Left lung (tissue), 14 donors: ENCODE measurements at regions of chr13 and their contacts with region 1.

Region 1: GRCh38 chr13:102845630-102846260 is at the start of gene ERCC5:
- DNase-seq: peak; percentile 93 to 99 (median 96)
- ATAC-seq: peak; percentile 94
- H3K4me3 ChIP-seq: peak within 1 kb of the TSS; percentile 75 to 89
- H3K27ac ChIP-seq: peak within 1 kb of the TSS; percentile 98 to 100
- H3K4me1 ChIP-seq: peaks cover 7 to 24% of the 10 kb centered on the region in 2 donors
- H3K27me3 ChIP-seq: no peaks in the 10 kb centered on the region
- CTCF ChIP-seq: no peak
- polyA plus RNA-seq, gene ERCC5: 70.8 to 95.8 (median 85.0) TPM

Region 2: GRCh38 chr13:102591988-102592781 is 253.6 kb before region 1 on chr13:
- intact Hi-C with region 1: loop called in 1 of 2 experiments (anchors 5 kb)
- DNase-seq: peak; percentile 56 to 90 (median 72)
- ATAC-seq: peak; percentile 35
- H3K4me3 ChIP-seq: peak overlapping the region; percentile 38 to 56
- H3K27ac ChIP-seq: peak overlapping the region; percentile 53 to 62
- H3K4me1 ChIP-seq: peaks cover 0 to 29% of the 10 kb centered on the region in 2 donors
- H3K27me3 ChIP-seq: no peaks in the 10 kb centered on the region
- CTCF ChIP-seq: peak; percentile 39 to 50

Region 3: DNA sequence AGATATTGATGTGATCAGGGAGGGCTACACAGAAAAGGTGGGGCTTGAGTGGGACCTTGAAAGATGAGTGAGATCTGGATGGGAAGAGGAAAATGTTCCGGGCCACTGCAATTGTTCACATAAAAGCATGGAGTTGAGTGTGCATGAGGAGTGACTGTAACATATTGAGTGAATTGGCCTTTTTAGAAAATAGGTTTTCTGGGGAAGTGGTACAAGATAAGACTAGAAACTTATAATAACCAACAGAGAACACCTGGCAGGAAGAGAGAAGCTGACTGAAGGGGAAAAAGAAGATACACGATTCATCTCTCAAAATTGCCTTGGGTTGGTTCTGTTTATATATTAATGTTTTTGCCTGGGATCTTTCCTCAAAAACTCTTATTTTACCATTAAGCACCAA is 188.3 kb after region 1 on chr13:
- intact Hi-C with region 1: no loop called
- DNase-seq: no peak
- ATAC-seq: no peak
- H3K4me3 ChIP-seq: no peak overlapping the region
- H3K27ac ChIP-seq: no peak overlapping the region
- H3K4me1 ChIP-seq: no peaks in the 10 kb centered on the region
- H3K27me3 ChIP-seq: no peaks in the 10 kb centered on the region
- CTCF ChIP-seq: no peak

Region 4: DNA sequence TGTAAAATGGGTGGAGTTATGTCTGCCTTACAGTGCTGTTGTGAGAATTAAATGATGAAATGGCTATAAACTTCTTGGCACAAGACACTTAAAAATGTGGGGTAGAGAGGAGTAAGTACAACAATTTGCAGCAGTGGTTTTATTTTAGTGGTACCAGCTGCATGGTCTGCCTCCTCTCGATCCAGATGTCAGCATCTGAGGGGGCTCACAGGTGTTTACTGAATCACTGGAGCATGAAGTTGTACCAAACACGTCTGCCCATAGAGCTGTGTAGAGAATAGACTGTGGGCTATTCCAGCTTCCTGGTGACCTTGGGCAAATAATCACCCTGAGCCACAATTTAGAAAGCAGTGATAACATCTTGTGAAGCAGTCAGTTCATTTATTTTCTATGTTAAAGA is 209.4 kb after region 1 on chr13:
- intact Hi-C with region 1: no loop called
- DNase-seq: no peak
- ATAC-seq: no peak
- H3K4me3 ChIP-seq: no peak overlapping the region
- H3K27ac ChIP-seq: no peak overlapping the region
- H3K4me1 ChIP-seq: no peaks in the 10 kb centered on the region
- H3K27me3 ChIP-seq: no peaks in the 10 kb centered on the region
- CTCF ChIP-seq: no peak